Heart right ventricle (tissue), 16 donors: ENCODE measurements at regions of chr2 and their contacts with region 1.

Region 1: DNA sequence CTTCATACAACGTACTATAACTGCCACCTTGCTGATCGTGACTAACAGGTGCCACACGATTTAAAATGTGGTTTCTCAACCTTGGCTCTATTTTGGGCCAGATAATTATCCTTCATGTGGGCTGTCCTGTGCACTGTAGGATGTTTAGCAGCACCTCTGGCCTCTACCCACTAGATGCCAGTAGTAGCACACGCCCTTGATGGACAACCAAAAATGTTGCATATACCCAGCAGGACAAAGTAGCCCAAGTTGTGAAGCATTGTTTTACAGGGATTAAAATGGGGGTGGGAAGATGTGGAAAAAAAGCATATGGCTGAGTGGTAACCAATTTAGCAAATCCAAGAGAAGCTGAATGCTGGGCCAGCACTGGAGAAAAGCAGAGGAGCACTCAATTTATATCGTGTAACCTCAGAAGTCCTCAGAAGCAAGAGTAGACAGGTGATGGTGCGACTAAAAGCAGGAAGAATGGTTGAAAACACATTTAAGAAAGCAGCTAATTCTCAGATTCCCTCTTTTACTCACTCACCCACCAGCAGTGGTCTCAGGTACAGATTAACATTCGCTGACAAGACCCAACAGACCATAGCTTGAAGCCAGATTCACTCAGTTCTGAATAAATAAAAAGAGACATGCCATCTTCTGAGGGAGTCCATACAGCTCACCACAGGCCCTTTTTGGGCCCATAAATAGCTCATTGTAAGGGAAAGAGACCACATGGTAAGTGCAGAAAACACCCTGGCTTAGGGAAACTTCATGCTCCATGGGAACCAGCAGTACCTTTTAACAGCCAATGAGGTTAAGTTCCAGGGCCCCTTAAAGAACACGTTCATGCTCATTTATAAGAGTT is 50.6 kb downstream of the RAPH1 start:
- DNase-seq: peak in 1 of 2 donors; percentile 19
- ATAC-seq: peak; percentile 71 to 91 (median 82)
- H3K4me3 ChIP-seq: no peak overlapping the region
- H3K27ac ChIP-seq: no peak overlapping the region
- H3K4me1 ChIP-seq: peaks cover 0 to 6% (median 0%) of the 10 kb centered on the region in 9 donors
- H3K27me3 ChIP-seq: no peaks in the 10 kb centered on the region
- CTCF ChIP-seq: peak; percentile 48 to 79 (median 70)

Region 2: GRCh38 chr2:203261326-203262159 is 222.9 kb before region 1 on chr2:
- intact Hi-C with region 1: no loop called
- DNase-seq: no peak
- ATAC-seq: no peak
- H3K4me3 ChIP-seq: no peak overlapping the region
- H3K27ac ChIP-seq: no peak overlapping the region
- H3K4me1 ChIP-seq: peaks cover 0 to 3% (median 0%) of the 10 kb centered on the region in 9 donors
- H3K27me3 ChIP-seq: no peaks in the 10 kb centered on the region
- CTCF ChIP-seq: no peak

Region 3: GRCh38 chr2:203650860-203651613 is 166.5 kb after region 1 on chr2:
- intact Hi-C with region 1: loop called in 8 of 10 experiments (anchors 1 to 10 kb)
- DNase-seq: peak in 1 of 2 donors; percentile 42
- ATAC-seq: peak; percentile 70 to 85 (median 82)
- H3K4me3 ChIP-seq: no peak overlapping the region
- H3K27ac ChIP-seq: peak overlapping the region in 9 of 10 donors; percentile 6 to 82 (median 58)
- H3K4me1 ChIP-seq: peaks cover 5 to 41% (median 31%) of the 10 kb centered on the region in 9 donors
- H3K27me3 ChIP-seq: no peaks in the 10 kb centered on the region
- CTCF ChIP-seq: peak in 8 of 9 donors; percentile 12 to 61 (median 46)